ENCODE measurements at regions of chr19 and their contacts with region 1.

Region 1: DNA sequence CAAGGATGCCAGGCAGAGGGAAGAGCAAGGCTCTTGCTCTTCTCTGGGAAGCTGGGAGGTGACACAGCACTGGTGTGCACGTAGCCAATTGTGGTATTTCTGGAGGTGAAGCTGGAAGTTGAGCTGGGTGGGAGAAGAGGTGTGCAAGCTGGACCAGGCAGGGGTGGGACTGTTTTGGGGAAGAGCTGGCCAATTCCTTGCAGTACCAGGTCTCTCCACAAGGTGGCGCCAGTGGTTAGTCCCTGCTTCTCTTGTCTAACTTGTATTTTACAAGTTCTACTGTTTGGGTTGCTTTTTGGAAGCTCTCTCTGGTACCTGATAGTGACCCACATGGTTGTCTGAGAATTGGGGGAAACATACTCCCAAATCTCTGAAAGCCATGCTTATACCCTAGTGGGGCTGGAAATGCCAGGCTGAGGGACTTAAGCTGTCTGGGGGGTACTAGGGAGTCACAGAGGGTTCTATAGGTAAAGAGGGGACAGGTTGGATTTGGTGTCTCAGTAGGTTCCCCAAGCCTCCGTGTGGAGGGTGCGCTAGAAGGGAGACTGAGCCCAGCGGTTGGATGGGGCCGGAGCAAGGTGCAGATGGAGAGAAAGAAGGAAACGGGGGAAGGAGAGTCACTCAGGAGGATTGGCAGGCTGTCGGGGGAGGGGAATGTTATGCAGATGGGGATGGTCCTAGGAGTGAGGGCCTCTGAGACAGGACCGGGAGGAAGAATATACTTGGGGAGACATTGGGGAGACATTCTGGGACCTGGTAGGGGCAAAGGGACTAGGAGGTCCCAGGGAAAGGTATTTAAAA is 3.0 kb downstream of the HPN start:
- DNase-seq: peak; percentile 28
- ATAC-seq: no peak
- H3K4me3 ChIP-seq: peak overlapping the region in 1 of 3 experiments; percentile 84; a peak in 2 of 6 replicates
- H3K27ac ChIP-seq: peak overlapping the region; percentile 99
- H3K4me1 ChIP-seq: peaks cover 63% of the 10 kb centered on the region
- H3K27me3 ChIP-seq: no peaks in the 10 kb centered on the region
- CTCF ChIP-seq: peak; percentile 86
- EP300 ChIP-seq: no peak
- POLR2A ChIP-seq: no peak; a peak in 1 of 4 replicates
- RAD21 ChIP-seq: no peak; the same call in 1 of the 2 replicates

Region 2: GRCh38 chr19:34999498-35000341 is 44.8 kb before region 1 on chr19 and contains the start of gene GRAMD1A:
- CTCF ChIA-PET with region 1: no interaction called
- POLR2A ChIA-PET with region 1: interaction called, 9 read pairs
- in situ Hi-C with region 1: no loop called
- intact Hi-C with region 1: loop called (anchors 5 kb)
- DNase-seq: peak; percentile 81
- ATAC-seq: peak; percentile 10; the same call in 2 of the 3 replicates
- H3K4me3 ChIP-seq: peak within 1 kb of the TSS; percentile 81 to 86 (median 81)
- H3K27ac ChIP-seq: peak within 1 kb of the TSS; percentile 83
- H3K4me1 ChIP-seq: peaks cover 81% of the 10 kb centered on the region
- H3K27me3 ChIP-seq: no peaks in the 10 kb centered on the region; a peak in 1 of 5 replicates
- CTCF ChIP-seq: no peak
- EP300 ChIP-seq: 0 out of 4 replicates have a peak, but pooled peaks of 1 of the 2 experiments have one; percentile 16
- POLR2A ChIP-seq: peak in 1 of 2 experiments; percentile 64; a peak in 3 of 4 replicates
- RAD21 ChIP-seq: no peak
- total RNA-seq, gene GRAMD1A: 8.0 and 14.7 TPM in 2 replicates

Region 3: DNA sequence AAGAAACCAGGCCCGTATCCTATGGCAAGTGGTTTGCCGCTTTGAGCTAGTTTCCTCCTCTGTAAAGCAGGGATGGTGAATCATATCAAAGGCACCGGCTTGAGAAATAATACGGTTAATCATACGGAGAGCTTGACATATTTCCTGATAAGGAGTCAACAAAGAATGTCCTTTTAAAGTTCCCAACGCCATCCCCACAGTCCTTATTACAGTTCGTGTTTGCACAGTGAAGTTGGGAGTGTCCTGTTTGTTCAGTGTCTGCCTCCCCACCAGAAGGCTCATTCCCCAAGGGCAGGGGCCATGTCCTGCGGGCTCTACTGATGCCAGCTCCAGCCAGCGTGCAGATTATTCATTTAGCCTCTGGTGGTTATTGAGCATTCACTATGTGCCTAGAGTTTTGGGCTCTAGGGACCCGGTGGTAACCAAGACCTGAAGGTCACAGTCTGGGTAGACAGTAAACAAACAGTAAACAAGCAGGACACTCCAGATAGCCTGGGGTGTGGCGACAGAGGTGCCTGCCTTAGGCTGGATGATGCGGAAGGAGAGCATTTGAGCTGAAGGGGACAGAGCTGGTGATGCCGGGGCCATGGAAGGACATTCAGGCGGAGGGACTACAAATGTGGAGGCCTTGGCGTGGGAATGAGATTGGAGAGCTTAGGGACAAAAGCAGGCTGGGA is 38.0 kb before region 1 on chr19:
- CTCF ChIA-PET with region 1: no interaction called
- POLR2A ChIA-PET with region 1: interaction called, 15 read pairs
- in situ Hi-C with region 1: no loop called
- intact Hi-C with region 1: no loop called
- DNase-seq: peak; percentile 99
- ATAC-seq: peak; percentile 89
- H3K4me3 ChIP-seq: peak overlapping the region in 1 of 3 experiments; percentile 10; a peak in 1 of 6 replicates
- H3K27ac ChIP-seq: peak overlapping the region; percentile 63
- H3K4me1 ChIP-seq: peaks cover 60% of the 10 kb centered on the region
- H3K27me3 ChIP-seq: no peaks in the 10 kb centered on the region
- CTCF ChIP-seq: peak; percentile 19; the same call in 1 of the 2 replicates
- EP300 ChIP-seq: peak; percentile 82 to 95; a peak in 3 of 4 replicates
- POLR2A ChIP-seq: peak in 1 of 2 experiments; percentile 43; a peak in 2 of 4 replicates
- RAD21 ChIP-seq: peak; percentile 27; the same call in 1 of the 2 replicates

Region 4: DNA sequence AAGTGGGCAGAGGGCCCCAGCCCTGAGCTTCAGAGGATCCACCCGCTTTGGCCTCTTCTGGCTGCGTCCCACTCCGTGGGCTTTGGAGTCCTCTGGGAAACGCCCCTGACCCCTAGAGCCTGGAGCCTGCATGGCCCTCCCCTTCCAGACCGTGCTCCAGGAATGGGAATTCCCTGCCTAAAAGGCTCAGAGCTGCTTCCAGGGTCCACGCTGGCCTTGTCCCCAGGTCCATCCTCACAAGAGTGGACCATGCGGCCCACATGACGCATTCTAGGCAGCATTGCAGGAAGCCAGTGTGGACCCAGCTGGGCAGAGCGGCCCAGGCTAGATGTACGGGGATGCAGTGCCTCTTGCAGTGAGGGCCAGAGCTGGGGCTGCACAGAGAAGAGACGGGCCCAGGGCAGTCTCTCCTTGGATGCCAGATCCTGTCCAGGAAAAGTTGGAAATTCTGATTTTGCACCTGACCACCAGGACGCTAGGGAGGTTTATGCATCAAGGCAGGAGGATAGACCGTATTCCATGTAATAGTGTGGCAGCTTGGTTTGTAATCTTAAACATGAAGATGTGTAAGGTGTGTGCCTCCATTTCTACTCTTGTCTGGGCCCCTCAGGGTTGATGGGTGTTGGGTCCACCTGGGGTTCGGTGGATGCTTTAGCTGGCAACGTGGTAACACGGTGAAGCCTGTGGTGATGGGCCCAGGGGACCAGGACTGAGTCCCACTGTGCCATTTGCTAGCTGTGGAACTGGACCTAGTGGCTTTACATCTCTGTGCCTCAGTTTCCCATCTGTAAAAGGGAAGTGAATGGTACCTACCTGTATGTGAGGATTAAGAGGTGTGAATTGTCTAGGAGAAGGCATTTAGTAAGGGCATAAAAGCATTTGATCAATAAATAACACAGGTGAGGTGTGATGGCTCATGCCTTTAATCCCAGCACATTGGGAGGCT is 56.3 kb after region 1 on chr19:
- CTCF ChIA-PET with region 1: no interaction called
- POLR2A ChIA-PET with region 1: no interaction called
- in situ Hi-C with region 1: no loop called
- intact Hi-C with region 1: loop called (anchors 2 kb)
- DNase-seq: no peak
- ATAC-seq: peak; percentile 58
- H3K4me3 ChIP-seq: peak overlapping the region in 1 of 3 experiments; percentile 17; a peak in 1 of 6 replicates
- H3K27ac ChIP-seq: no peak overlapping the region
- H3K4me1 ChIP-seq: peaks cover 41% of the 10 kb centered on the region
- H3K27me3 ChIP-seq: peaks cover 0 to 4% of the 10 kb centered on the region in 2 experiments; a peak in 1 of 5 replicates
- CTCF ChIP-seq: peak; percentile 15; the same call in 1 of the 2 replicates
- EP300 ChIP-seq: no peak
- POLR2A ChIP-seq: no peak
- RAD21 ChIP-seq: no peak

Region 5: GRCh38 chr19:35168207-35168606 is 123.7 kb after region 1 on chr19:
- CTCF ChIA-PET with region 1: no interaction called
- POLR2A ChIA-PET with region 1: no interaction called
- in situ Hi-C with region 1: no loop called
- intact Hi-C with region 1: no loop called
- DNase-seq: no peak
- ATAC-seq: no peak
- H3K4me3 ChIP-seq: no peak overlapping the region
- H3K27ac ChIP-seq: no peak overlapping the region
- H3K4me1 ChIP-seq: no peaks in the 10 kb centered on the region
- H3K27me3 ChIP-seq: no peaks in the 10 kb centered on the region; a peak in 1 of 5 replicates
- CTCF ChIP-seq: no peak
- EP300 ChIP-seq: no peak
- POLR2A ChIP-seq: no peak
- RAD21 ChIP-seq: no peak